ENCODE measurements at regions of chr6 and their contacts with region 1.

Region 1: DNA sequence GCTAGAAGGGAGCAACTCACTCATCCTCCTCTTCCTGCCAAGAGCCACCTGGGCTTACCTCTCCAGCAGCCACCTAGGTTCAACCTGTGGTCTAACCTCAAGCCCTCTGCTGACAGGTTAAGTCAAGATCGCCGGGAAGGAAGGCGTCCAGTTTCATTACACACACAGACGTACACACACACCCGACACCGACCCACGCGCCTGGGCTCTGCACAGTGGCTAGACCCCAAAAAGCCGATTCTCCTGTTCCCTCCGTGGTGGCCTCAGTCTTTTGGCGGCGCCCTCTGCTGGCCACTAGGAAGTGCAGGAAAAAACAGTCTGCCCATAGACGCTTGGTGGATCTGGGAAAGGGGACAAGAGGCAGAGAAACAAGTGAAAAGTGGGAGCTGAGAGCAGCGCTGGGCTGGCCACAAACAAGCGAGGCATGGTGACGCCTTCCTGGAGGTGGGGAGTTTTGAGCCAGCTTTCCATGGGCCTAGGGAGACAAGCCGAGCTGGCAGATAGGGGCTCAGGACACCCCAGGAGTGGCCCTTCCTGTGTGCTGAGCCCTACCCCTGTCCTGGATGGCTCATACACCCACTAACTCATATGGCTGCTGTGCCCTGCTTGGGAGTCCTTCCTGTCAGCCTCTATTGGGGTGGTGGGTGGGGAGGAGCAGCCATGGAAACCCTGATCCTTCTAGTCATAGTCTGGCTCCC is 52.7 kb downstream of the MRPL14 start:
- DNase-seq: peak; percentile 54 to 83
- ATAC-seq: peak; percentile 51 to 57
- H3K4me3 ChIP-seq: peak overlapping the region in 1 of 4 donors; percentile 21
- H3K27ac ChIP-seq: peak overlapping the region; percentile 81 to 93 (median 90)
- H3K4me1 ChIP-seq: peaks cover 32 to 41% of the 10 kb centered on the region in 2 donors
- H3K27me3 ChIP-seq: no peaks in the 10 kb centered on the region
- CTCF ChIP-seq: peak; percentile 89 to 94 (median 93)
- POLR2A ChIP-seq: no peak

Region 2: GRCh38 chr6:43608310-43608763 is 466.3 kb before region 1 on chr6:
- in situ Hi-C with region 1: no loop called
- intact Hi-C with region 1: loop called (anchors 5 kb)
- DNase-seq: peak in 1 of 2 donors; percentile 65
- ATAC-seq: peak; percentile 69 to 81
- H3K4me3 ChIP-seq: no peak overlapping the region
- H3K27ac ChIP-seq: no peak overlapping the region
- H3K4me1 ChIP-seq: no peaks in the 10 kb centered on the region
- H3K27me3 ChIP-seq: no peaks in the 10 kb centered on the region
- CTCF ChIP-seq: peak; percentile 37 to 84 (median 72)
- POLR2A ChIP-seq: no peak

Region 3: DNA sequence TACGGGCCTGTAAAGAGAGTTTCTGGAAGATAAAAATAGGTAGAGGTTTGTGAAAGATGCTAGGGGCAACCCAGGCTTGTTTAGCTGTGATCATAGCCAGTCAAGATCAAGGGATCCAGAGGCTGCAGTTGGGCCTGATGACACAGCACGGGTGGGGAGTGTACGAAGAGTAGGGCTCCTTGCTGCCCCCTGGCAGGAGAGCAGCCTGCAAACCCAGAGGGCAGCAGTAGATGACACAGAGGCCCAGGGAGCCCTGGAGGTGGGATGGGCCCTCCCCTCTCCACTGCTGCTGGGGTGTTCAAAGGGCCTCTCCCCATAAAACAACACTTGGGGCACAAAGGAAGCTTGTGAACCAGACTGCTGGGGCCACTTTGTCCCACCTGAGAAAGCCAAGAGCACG is 257.4 kb before region 1 on chr6:
- in situ Hi-C with region 1: no loop called
- intact Hi-C with region 1: loop called (anchors 5 kb)
- DNase-seq: peak; percentile 48 to 80
- ATAC-seq: peak; percentile 52 to 88
- H3K4me3 ChIP-seq: no peak overlapping the region
- H3K27ac ChIP-seq: peak overlapping the region in 3 of 4 donors; percentile 27 to 33 (median 33)
- H3K4me1 ChIP-seq: peaks cover 6 to 10% of the 10 kb centered on the region in 2 donors
- H3K27me3 ChIP-seq: no peaks in the 10 kb centered on the region
- CTCF ChIP-seq: peak; percentile 13 to 57 (median 43)
- POLR2A ChIP-seq: no peak

Region 4: GRCh38 chr6:43951063-43951755 is 123.4 kb before region 1 on chr6:
- in situ Hi-C with region 1: no loop called
- intact Hi-C with region 1: loop called (anchors 2 kb)
- DNase-seq: peak in 1 of 2 donors; percentile 64
- ATAC-seq: no peak
- H3K4me3 ChIP-seq: no peak overlapping the region
- H3K27ac ChIP-seq: peak overlapping the region; percentile 85 to 97 (median 88)
- H3K4me1 ChIP-seq: peaks cover 14 to 21% of the 10 kb centered on the region in 2 donors
- H3K27me3 ChIP-seq: no peaks in the 10 kb centered on the region
- CTCF ChIP-seq: peak; percentile 31 to 64 (median 46)
- POLR2A ChIP-seq: no peak

Region 5: GRCh38 chr6:44002593-44003344 is 71.8 kb before region 1 on chr6:
- in situ Hi-C with region 1: no loop called
- intact Hi-C with region 1: loop called (anchors 2 kb)
- DNase-seq: peak; percentile 39 to 78
- ATAC-seq: peak; percentile 22 to 36
- H3K4me3 ChIP-seq: peak overlapping the region; percentile 36 to 49 (median 44)
- H3K27ac ChIP-seq: peak overlapping the region; percentile 83 to 93 (median 88)
- H3K4me1 ChIP-seq: peaks cover 36 to 45% of the 10 kb centered on the region in 2 donors
- H3K27me3 ChIP-seq: no peaks in the 10 kb centered on the region
- CTCF ChIP-seq: peak in 4 of 5 experiments; percentile 8 to 36 (median 29)
- POLR2A ChIP-seq: peak; percentile 63 to 70

Region 6: DNA sequence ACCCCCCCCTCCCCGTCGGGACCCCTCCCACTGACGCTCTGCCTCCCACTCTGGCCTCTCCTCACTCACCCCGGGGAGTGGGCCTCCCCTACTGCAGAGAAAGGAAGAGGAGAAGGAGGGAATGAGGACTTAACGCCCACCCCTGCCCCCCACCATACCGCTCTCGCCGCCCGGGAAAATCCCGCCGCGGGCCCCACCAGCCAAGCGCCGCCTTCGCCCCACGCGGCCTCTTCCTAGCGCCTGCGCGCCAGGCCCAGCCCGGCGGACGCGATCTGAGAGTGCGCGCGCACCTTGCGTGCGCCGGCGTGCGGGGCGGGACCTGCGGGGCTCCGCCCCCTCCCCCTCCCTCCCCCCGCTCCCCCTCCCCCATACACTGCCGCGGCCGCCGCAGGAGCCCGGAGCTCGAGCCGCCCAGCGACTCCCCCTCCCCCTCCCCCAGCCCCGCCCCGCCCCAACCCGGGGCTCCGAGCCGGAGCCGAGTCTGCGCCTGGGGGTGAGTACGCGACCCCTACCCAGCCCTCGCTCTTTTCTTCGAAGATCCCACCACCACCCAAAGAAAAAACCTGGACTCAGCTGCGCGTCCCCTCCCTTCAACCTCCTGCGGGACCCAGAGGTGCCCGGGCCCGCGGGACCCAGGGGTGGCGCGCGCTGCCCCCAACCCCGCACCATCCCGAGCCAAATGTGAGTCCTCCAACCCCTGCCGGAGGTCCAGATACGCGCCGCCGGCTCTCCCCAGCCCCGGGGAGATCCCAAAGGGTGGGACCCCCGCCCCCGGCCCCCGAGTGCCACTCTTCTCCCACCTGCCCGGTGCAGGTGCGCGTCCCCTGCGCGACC is 52.8 kb after region 1 on chr6 and contains the starts of genes MRPL14 and TMEM63B:
- in situ Hi-C with region 1: no loop called
- intact Hi-C with region 1: no loop called
- DNase-seq: peak; percentile 71 to 84
- ATAC-seq: peak; percentile 68 to 78
- H3K4me3 ChIP-seq: peak within 1 kb of the TSS; percentile 78 to 99 (median 94)
- H3K27ac ChIP-seq: peak within 1 kb of the TSS; percentile 97 to 100 (median 99)
- H3K4me1 ChIP-seq: peaks cover 52 to 59% of the 10 kb centered on the region in 2 donors
- H3K27me3 ChIP-seq: no peaks in the 10 kb centered on the region
- CTCF ChIP-seq: no peak
- POLR2A ChIP-seq: peak; percentile 91 to 93
- total RNA-seq, gene MRPL14: 100 to 180 (median 152) TPM
- total RNA-seq, gene TMEM63B: 27.2 to 71.9 (median 43.7) TPM

Measured in gastrocnemius medialis (tissue), 4 donors.